ENCODE measurements at regions of chr1 and their contacts with region 1.

Region 1: DNA sequence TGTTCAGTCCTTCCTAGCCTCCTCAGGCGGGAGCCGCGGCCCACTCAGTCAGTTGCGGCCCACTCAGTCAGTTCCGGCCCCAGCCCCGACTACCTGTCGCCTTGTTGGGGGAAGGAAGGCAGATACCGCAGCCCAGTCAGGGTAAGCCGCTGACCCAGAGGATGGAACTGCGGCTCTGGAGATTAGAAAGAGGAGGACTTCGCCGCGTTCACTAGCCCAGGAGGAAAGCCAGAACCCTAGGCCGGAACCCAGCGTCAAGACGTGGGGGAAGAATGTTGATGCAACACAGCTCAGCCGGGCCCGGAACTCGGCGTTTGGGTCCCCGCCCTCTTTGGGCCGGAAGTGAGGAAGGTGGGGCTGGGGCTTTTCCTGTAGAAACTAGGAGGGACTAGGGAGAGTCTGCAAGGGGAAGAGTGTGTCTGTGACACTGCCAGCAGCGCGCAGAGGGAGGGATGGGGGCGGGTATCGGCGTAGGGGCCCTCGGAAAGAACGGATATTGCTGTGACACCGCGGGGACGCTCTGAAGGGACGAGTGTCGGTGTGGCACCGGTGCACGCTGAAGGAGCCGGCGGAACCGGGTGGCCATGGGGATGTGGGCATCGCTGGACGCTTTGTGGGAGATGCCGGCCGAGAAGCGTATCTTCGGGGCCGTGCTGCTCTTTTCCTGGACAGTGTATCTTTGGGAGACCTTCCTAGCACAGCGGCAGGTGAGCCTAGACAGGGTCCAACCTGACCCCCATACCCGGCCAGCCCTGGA is at the start of gene ZMPSTE24:
- DNase-seq: peak; percentile 97
- H3K4me3 ChIP-seq: peak within 1 kb of the TSS; percentile 78 to 87 (median 83)
- H3K27ac ChIP-seq: peak within 1 kb of the TSS; percentile 88 to 96 (median 94)
- H3K4me1 ChIP-seq: peaks cover 0 to 52% (median 36%) of the 10 kb centered on the region in 4 donors
- H3K27me3 ChIP-seq: no peaks in the 10 kb centered on the region
- CTCF ChIP-seq: no peak
- EP300 ChIP-seq: peak in 2 of 4 donors; percentile 14 to 22
- POLR2A ChIP-seq: peak; percentile 45 to 48
- total RNA-seq, gene ZMPSTE24: 31.0 to 40.7 (median 40.5) TPM

Region 2: DNA sequence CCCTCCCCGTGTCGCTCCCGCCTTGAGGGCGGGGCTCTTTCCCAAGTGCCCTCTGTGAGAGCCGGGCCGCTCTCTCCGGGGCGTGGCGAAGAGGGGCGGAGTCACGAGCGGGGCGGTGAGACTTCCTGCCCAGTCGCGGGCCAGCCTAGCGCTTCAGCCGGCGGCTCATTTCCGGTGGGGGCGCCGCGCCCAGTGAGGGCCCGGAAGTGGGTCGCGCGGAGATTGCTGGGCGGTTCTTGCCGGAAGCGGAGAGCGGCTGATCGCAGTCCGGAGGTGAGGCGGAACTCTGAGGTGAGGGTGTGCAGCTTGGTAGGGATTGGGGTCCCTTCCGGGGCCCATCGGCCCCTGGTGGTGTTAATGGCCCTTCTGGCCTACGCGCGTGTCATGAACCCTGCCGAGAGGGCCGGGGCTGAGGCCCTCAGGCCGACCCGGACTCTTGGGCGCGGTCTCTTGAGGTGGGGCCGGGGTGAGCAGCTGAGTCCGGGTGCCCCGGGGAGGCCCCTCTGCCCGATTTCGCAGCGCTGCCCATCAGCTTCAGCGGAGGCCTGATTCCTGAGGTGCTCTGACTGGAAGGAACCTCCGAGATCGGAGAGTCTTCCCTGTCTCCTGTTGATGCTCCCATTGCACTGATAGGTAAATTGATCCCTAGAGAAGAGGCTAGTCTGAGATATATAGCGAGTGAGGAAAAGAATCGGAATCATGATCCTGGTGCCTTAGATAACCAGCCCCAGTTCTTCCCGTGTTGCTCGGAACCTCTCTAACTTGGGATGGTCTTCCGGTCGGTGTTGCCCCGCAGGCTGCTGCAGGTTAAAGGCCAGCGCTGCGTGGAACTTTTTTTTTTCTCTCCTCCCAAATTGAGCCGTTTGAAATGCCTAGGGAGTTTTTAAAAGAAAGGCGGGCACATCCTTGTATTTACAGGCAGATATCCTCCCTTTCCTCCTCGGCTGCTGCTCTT is 217.1 kb before region 1 on chr1 and contains the start of gene CAP1:
- intact Hi-C with region 1: loop called (anchors 5 kb)
- DNase-seq: peak; percentile 99
- H3K4me3 ChIP-seq: peak within 1 kb of the TSS; percentile 59 to 88 (median 80)
- H3K27ac ChIP-seq: peak within 1 kb of the TSS; percentile 99 to 100 (median 100)
- H3K4me1 ChIP-seq: peaks cover 0 to 90% (median 73%) of the 10 kb centered on the region in 4 donors
- H3K27me3 ChIP-seq: no peaks in the 10 kb centered on the region
- CTCF ChIP-seq: no peak
- EP300 ChIP-seq: peak in 1 of 4 donors; percentile 68
- POLR2A ChIP-seq: peak in 1 of 2 donors; percentile 1
- total RNA-seq, gene CAP1: 177 to 234 (median 231) TPM

Region 3: GRCh38 chr1:40161125-40161887 is 96.6 kb before region 1 on chr1 and contains the start of gene RLF:
- intact Hi-C with region 1: loop called (anchors 2 kb)
- DNase-seq: peak; percentile 98
- H3K4me3 ChIP-seq: peak within 1 kb of the TSS; percentile 69 to 97 (median 84)
- H3K27ac ChIP-seq: peak within 1 kb of the TSS; percentile 92 to 97 (median 94)
- H3K4me1 ChIP-seq: peaks cover 0 to 44% (median 35%) of the 10 kb centered on the region in 4 donors
- H3K27me3 ChIP-seq: no peaks in the 10 kb centered on the region
- CTCF ChIP-seq: peak in 1 of 4 experiments; percentile 8
- EP300 ChIP-seq: peak in 1 of 4 donors; percentile 89
- POLR2A ChIP-seq: peak; percentile 88 to 94
- total RNA-seq, gene RLF: 19.9 to 27.6 (median 23.4) TPM

Region 4: DNA sequence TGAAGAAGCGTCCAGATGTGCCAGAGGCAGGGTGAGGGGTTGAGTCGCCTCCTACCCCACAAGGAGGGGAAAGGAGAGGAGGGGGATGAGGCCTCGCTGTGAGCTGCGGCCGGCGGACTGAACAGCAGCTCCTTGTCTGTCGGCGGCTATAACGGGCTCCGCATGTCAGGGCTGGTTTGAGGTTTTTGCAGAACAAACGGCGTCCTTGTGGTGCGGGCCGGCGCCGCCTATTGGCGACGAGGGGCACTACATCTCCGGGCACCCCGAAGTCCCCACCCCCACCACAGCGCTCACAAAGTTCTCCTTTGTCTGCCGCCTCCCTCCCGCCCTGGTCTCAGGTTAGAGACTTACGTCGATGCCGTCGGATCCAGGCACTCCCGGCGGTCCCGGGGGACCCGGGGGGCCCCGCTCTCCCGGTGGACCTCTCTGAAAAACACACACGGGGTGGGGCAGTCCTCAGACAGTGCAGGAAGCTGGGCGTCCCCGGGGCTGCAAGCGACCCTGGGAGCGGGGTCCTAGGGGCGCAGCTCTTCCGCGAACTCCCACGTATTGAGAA is 57.5 kb after region 1 on chr1:
- intact Hi-C with region 1: loop called (anchors 5 kb)
- DNase-seq: peak; percentile 90
- H3K4me3 ChIP-seq: peak overlapping the region; percentile 15 to 55 (median 48)
- H3K27ac ChIP-seq: peak overlapping the region in 3 of 4 donors; percentile 37 to 65 (median 50)
- H3K4me1 ChIP-seq: peaks cover 0 to 31% (median 26%) of the 10 kb centered on the region in 4 donors
- H3K27me3 ChIP-seq: peaks cover 16 to 47% (median 26%) of the 10 kb centered on the region in 3 donors
- CTCF ChIP-seq: peak; percentile 77 to 92 (median 83)
- EP300 ChIP-seq: no peak
- POLR2A ChIP-seq: no peak

Measured in sigmoid colon (tissue), 7 donors.